ENCODE measurements at regions of chr13 and their contacts with region 1.

Region 1: GRCh38 chr13:20197361-20197834 is 4.7 kb upstream of the GJB2 start:
- H3K4me3 ChIP-seq: no peak overlapping the region
- H3K27ac ChIP-seq: no peak overlapping the region
- H3K4me1 ChIP-seq: no peaks in the 10 kb centered on the region
- CTCF ChIP-seq: no peak

Region 2: DNA sequence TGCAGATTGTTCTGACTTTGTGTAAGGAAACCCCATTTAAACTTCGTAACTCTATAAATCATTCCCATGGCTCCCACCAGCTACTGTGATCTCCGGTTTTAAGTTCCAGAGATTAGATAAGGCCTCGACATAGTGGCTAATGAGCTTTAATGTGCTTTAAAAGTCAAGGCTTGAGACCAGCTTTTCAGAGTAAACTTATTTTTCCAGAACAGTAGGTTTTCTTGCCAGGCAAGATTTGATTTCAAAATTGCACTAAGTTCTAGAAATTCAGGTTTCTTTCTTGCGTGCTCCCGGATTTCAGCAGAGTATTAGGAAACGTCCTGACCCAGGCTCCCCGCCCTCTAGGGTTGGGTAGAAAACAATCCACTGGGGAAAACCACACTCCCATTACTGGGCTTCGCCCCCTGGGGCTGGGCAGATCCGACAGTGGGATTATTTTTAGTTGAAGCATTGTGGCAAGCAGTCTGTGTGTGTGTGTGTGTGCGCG is 284.9 kb after region 1 on chr13:
- CTCF ChIA-PET with region 1: interaction called, 10 read pairs
- POLR2A ChIA-PET with region 1: no interaction called
- H3K4me3 ChIP-seq: no peak overlapping the region
- H3K27ac ChIP-seq: peak overlapping the region; percentile 62
- H3K4me1 ChIP-seq: peaks cover 5% of the 10 kb centered on the region; the same call in 1 of the 2 replicates
- CTCF ChIP-seq: no peak

Region 3: DNA sequence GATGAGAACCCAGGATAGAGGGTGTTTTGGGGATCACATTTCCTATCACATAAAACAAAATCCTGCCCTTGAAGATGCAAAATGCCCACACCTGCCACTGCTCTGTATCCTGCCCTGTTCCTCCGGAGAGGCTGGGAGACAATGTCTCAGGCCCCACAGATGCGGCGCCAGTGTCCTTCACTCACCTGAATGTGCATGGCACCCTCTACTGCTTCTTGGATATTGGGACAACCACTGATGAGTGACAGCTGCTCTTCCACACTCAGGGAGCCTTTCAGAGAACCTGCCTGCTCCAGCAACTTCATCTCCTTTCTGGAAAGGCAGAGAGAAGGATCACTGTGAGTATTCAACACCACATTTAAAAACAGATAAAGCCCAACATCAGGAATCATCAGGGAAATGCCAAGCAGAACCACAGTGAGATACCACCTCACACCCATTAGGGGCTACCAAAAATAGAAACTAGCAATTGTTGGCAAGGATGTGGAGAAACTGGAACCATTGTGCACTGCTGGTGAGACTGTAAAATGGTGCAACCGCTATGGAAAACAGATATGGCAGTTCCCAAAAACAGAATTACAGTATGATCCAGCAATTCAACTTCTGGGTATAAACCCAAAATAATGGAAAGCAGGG is 291.9 kb after region 1 on chr13:
- CTCF ChIA-PET with region 1: interaction called, 20 read pairs
- POLR2A ChIA-PET with region 1: no interaction called
- H3K4me3 ChIP-seq: no peak overlapping the region
- H3K27ac ChIP-seq: no peak overlapping the region
- H3K4me1 ChIP-seq: no peaks in the 10 kb centered on the region
- CTCF ChIP-seq: no peak

Region 4: GRCh38 chr13:20495082-20496023 is 298.0 kb after region 1 on chr13:
- CTCF ChIA-PET with region 1: interaction called, 20 read pairs
- POLR2A ChIA-PET with region 1: no interaction called
- H3K4me3 ChIP-seq: no peak overlapping the region
- H3K27ac ChIP-seq: no peak overlapping the region
- H3K4me1 ChIP-seq: no peaks in the 10 kb centered on the region
- CTCF ChIP-seq: peak; percentile 43